CD4-positive, alpha-beta T cell (primary cell): ENCODE measurements at regions of chr14 and their contacts with region 1.

Region 1: DNA sequence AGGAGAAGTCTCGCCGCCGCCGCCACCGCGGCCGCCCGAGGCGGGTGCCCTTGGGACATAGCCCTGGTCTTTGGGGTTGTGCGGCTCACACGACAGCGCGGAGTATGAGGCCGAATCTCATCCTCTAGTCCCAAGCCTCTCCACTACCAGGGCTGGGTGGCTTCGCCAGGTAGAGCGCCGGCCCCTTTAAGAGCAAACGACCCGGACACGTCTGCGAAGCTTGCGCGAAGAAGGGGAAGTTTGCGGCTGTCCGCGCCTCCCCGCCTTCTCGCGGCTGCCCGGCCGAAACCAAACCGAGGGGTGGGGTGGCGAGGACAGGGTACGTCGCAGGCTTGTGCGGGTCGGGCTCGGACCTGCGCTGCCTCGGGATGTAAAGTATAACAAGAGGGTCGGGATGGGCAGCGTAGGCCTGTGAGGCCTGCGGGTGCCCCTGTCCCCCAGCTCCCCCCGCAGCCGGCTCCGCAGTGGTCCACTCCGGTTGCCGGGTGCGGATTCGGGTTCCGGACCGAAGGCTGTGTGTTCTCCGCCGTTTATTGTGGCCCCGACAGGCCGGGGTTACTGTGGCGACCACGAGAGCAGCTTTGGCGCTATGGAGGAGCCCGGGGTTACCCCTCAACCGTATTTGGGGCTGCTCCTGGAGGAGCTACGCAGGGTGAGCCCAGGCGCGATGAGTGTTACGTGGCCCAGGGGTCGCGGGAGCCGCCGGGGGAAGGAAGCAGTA is 33.3 kb downstream of the MIA2 start:
- DNase-seq: peak; percentile 54 to 90 (median 69)
- ATAC-seq: peak; percentile 69
- H3K4me3 ChIP-seq: peak overlapping the region; percentile 99
- H3K4me3 Mint-ChIP-seq: peak overlapping the region; percentile 99
- H3K27ac ChIP-seq: peak overlapping the region; percentile 89 to 96
- H3K27ac Mint-ChIP-seq: peak overlapping the region; percentile 97
- H3K4me1 ChIP-seq: peaks cover 31% of the 10 kb centered on the region
- H3K4me1 Mint-ChIP-seq: peaks cover 62% of the 10 kb centered on the region
- H3K27me3 ChIP-seq: no peaks in the 10 kb centered on the region
- H3K27me3 Mint-ChIP-seq: no peaks in the 10 kb centered on the region
- CTCF ChIP-seq: no peak

Region 2: DNA sequence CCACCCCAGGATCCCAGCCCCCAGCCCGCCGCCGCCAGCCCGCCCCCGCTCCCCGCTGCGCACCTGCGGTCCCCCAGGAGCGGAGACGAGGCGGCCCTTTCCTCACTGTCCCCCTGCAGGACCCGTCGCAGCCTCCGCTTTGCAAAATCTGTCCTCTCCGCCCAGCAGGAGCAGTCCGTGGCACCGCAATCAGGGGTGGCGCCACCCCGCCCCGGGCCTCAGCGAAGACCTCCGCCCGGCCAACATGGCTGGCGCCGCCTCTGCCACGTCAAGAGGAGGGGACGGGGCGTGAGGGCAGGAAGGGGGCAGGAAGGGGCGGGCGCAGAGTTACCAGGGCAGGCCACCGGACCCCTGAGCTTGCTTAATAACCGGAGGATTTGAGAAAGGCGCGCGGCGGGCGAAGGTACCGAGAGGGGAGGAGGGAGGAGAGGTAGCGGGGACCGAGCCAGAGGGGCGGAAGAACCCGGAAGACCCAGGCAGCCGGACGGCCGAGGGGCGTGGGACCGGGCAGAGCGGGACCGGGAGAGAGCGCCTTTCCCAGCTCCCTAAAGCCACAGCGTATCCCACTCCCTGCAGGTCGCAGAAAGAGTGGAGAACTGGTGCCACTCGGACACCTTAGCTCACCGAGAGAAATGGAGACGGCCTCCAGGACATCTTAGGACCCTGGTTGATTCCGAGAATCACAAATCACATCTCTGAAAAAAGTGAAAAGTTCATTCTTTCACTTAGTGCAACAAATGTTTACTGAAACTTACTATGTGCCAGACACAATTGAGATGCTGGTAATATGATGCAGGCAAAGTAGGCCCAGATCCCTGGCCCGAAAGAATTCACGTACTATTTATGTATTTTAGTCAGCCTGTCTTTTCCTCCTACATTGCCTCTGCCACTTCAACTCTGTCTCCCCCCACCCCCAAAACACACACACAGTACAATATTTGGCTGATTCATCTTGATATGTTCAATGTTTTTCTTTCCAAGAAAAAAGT is 163.8 kb before region 1 on chr14 and contains the start of gene SEC23A:
- CTCF ChIA-PET with region 1: no interaction called
- POLR2A ChIA-PET with region 1: interaction called, 13 read pairs
- intact Hi-C with region 1: loop called in 1 of 2 experiments (anchors 5 kb)
- DNase-seq: peak; percentile 62 to 91 (median 78)
- ATAC-seq: peak; percentile 95
- H3K4me3 ChIP-seq: peak within 1 kb of the TSS; percentile 100
- H3K4me3 Mint-ChIP-seq: peak within 1 kb of the TSS; percentile 98
- H3K27ac ChIP-seq: peak within 1 kb of the TSS; percentile 83 to 96
- H3K27ac Mint-ChIP-seq: peak within 1 kb of the TSS; percentile 98
- H3K4me1 ChIP-seq: peaks cover 34% of the 10 kb centered on the region
- H3K4me1 Mint-ChIP-seq: peaks cover 56% of the 10 kb centered on the region
- H3K27me3 ChIP-seq: no peaks in the 10 kb centered on the region
- H3K27me3 Mint-ChIP-seq: no peaks in the 10 kb centered on the region
- CTCF ChIP-seq: no peak
- total RNA-seq, gene SEC23A: 68.4 to 82.1 TPM

Region 3: GRCh38 chr14:39114073-39114838 is 152.8 kb before region 1 on chr14 and contains the start of gene GEMIN2:
- CTCF ChIA-PET with region 1: no interaction called
- POLR2A ChIA-PET with region 1: interaction called, 13 read pairs
- intact Hi-C with region 1: loop called in 1 of 2 experiments (anchors 5 kb)
- DNase-seq: peak; percentile 85 to 98 (median 92)
- ATAC-seq: peak; percentile 98
- H3K4me3 ChIP-seq: peak within 1 kb of the TSS; percentile 72
- H3K4me3 Mint-ChIP-seq: peak within 1 kb of the TSS; percentile 99
- H3K27ac ChIP-seq: peak within 1 kb of the TSS; percentile 55 to 65
- H3K27ac Mint-ChIP-seq: peak within 1 kb of the TSS; percentile 91
- H3K4me1 ChIP-seq: peaks cover 6% of the 10 kb centered on the region
- H3K4me1 Mint-ChIP-seq: peaks cover 17% of the 10 kb centered on the region
- H3K27me3 ChIP-seq: no peaks in the 10 kb centered on the region
- H3K27me3 Mint-ChIP-seq: no peaks in the 10 kb centered on the region
- CTCF ChIP-seq: no peak
- total RNA-seq, gene GEMIN2: 14.6 to 16.1 TPM

Region 4: GRCh38 chr14:39169541-39169900 is 97.5 kb before region 1 on chr14:
- CTCF ChIA-PET with region 1: interaction called, 3 read pairs
- POLR2A ChIA-PET with region 1: interaction called, 48 read pairs
- intact Hi-C with region 1: loop called (anchors 2 kb)
- DNase-seq: peak in 1 of 14 experiments; percentile 11
- ATAC-seq: no peak
- H3K4me3 ChIP-seq: peak overlapping the region; percentile 97
- H3K4me3 Mint-ChIP-seq: peak overlapping the region; percentile 91
- H3K27ac ChIP-seq: peak overlapping the region; percentile 95 to 96
- H3K27ac Mint-ChIP-seq: peak overlapping the region; percentile 100
- H3K4me1 ChIP-seq: peaks cover 33% of the 10 kb centered on the region
- H3K4me1 Mint-ChIP-seq: peaks cover 66% of the 10 kb centered on the region
- H3K27me3 ChIP-seq: no peaks in the 10 kb centered on the region
- H3K27me3 Mint-ChIP-seq: no peaks in the 10 kb centered on the region
- CTCF ChIP-seq: no peak

Region 5: GRCh38 chr14:39174560-39175444 is 92.2 kb before region 1 on chr14 and contains the start of gene PNN:
- CTCF ChIA-PET with region 1: interaction called, 3 read pairs
- POLR2A ChIA-PET with region 1: interaction called, 48 read pairs
- intact Hi-C with region 1: loop called (anchors 2 kb)
- DNase-seq: peak; percentile 91 to 100 (median 93)
- ATAC-seq: peak; percentile 85
- H3K4me3 ChIP-seq: peak within 1 kb of the TSS; percentile 96
- H3K4me3 Mint-ChIP-seq: peak within 1 kb of the TSS; percentile 97
- H3K27ac ChIP-seq: peak within 1 kb of the TSS; percentile 89 to 95
- H3K27ac Mint-ChIP-seq: peak within 1 kb of the TSS; percentile 96
- H3K4me1 ChIP-seq: peaks cover 36% of the 10 kb centered on the region
- H3K4me1 Mint-ChIP-seq: peaks cover 59% of the 10 kb centered on the region
- H3K27me3 ChIP-seq: no peaks in the 10 kb centered on the region
- H3K27me3 Mint-ChIP-seq: no peaks in the 10 kb centered on the region
- CTCF ChIP-seq: no peak
- total RNA-seq, gene PNN: 110 to 111 TPM

Region 6: GRCh38 chr14:39229222-39229543 is 37.8 kb before region 1 on chr14:
- CTCF ChIA-PET with region 1: interaction called, 3 read pairs
- POLR2A ChIA-PET with region 1: interaction called, 12 read pairs
- intact Hi-C with region 1: loop called in 1 of 2 experiments (anchors 1 kb)
- DNase-seq: peak in 12 of 14 experiments; percentile 7 to 90 (median 34)
- ATAC-seq: peak; percentile 91
- H3K4me3 ChIP-seq: no peak overlapping the region
- H3K4me3 Mint-ChIP-seq: no peak overlapping the region
- H3K27ac ChIP-seq: peak overlapping the region; percentile 44 to 78
- H3K27ac Mint-ChIP-seq: peak overlapping the region; percentile 57
- H3K4me1 ChIP-seq: peaks cover 24% of the 10 kb centered on the region
- H3K4me1 Mint-ChIP-seq: peaks cover 35% of the 10 kb centered on the region
- H3K27me3 ChIP-seq: no peaks in the 10 kb centered on the region
- H3K27me3 Mint-ChIP-seq: no peaks in the 10 kb centered on the region
- CTCF ChIP-seq: no peak

Region 7: DNA sequence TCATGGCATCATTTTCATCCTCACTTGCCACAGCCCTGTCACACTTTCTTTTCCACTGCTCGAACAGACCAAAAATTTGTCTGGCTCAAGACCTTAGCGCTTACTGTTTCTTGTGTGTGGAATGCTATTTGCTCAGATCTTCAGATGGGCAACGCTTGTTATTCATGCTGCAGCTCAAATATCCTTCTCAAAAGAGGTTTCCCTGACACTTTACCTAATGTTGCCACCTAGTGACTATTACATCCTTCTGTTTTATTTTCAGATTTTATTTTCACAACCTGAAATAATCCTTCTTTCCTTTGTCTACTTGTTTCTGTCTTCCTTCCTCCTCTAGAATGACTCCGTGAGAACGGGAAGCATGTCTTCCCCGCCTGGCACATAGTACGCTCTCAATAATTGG is 159.6 kb after region 1 on chr14:
- CTCF ChIA-PET with region 1: interaction called, 4 read pairs
- POLR2A ChIA-PET with region 1: interaction called, 99 read pairs
- intact Hi-C with region 1: loop called (anchors 2 to 5 kb)
- DNase-seq: peak in 3 of 14 experiments; percentile 29 to 46 (median 42)
- ATAC-seq: no peak
- H3K4me3 ChIP-seq: no peak overlapping the region
- H3K4me3 Mint-ChIP-seq: peak overlapping the region; percentile 6
- H3K27ac ChIP-seq: no peak overlapping the region
- H3K27ac Mint-ChIP-seq: no peak overlapping the region
- H3K4me1 ChIP-seq: peaks cover 37% of the 10 kb centered on the region
- H3K4me1 Mint-ChIP-seq: peaks cover 87% of the 10 kb centered on the region
- H3K27me3 ChIP-seq: no peaks in the 10 kb centered on the region
- H3K27me3 Mint-ChIP-seq: no peaks in the 10 kb centered on the region
- CTCF ChIP-seq: peak; percentile 42